ENCODE measurements at regions of chr2 and their contacts with region 1.

Region 1: DNA sequence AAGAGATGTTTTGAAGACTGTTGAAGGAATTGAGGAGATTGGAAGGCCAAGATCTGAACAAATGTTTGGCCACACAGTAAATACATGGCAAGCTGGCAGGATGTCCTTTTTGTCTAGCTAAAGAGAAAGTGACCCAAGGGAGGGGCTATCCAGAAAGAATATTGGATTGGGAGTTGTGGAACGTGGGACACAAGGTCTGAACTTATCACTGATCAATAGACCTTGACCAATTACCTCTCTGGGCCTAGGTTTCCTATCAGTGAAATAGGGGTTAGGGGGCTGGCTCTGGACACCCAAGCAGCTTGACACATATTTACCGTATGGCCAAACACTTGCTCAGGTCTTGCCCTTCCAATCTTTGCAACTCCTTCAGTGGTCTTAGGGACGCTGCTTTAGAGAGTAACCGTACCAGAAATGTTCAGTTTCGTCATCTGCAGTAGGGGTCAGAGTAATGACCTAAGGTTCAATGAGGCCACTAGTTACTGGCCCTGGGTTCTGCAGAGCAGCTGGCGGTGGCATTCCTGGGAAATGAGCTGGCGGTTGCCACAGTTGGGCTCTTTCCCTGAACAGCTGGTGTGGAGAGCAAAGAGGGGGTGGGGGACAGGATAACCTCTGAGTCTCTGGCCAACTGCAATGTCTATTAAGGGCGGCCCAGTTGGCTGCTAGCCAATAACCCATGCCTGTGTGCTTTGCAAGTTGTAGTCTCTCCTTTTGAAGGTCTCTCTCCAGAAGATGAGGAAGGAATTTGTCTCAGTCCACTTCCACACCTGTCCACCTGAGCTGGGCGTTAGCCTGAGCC is 70.2 kb upstream of the STPG4 start:
- DNase-seq: peak; percentile 83 to 94
- ATAC-seq: peak; percentile 96 to 99 (median 98)
- H3K4me3 ChIP-seq: no peak overlapping the region
- H3K27ac ChIP-seq: peak overlapping the region; percentile 70
- H3K4me1 ChIP-seq: peaks cover 45% of the 10 kb centered on the region
- H3K27me3 ChIP-seq: no peaks in the 10 kb centered on the region
- CTCF ChIP-seq: no peak

Region 2: DNA sequence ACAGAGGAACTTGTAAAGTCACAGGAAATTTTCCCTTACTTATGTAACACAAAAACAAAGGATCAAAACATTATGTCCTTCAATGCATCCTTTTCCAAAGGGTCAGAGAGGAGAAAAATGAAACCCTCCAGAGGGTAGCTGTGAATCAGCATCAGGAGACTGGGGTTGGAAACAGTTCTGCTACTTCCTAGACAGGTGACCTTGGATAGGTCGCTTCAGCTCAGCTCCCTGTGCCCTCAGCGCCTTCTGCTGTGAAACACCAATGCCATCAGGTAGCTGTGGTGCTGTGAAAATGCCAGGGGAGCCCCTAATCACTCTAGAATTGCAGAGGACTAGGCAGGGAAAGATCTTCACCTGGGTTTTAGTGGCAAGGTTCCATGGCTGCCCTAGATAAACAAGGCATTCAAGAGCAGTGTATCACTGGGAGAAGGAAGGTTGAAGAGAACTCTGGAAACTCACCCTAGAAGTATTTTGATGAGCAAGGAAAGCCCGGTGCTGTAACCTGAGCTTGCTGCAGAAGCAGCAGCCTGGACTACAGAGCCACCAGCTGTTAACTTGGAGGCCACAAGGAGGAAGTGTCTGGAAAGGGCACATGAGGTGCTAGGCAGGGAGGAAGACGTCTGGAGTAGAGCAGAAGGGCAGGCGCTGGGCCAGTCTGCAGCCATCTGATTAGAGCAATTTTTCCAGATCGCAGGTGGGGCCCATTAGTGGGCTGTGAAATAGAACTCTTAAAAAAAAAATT is 208.9 kb before region 1 on chr2:
- intact Hi-C with region 1: loop called in 1 of 2 experiments (anchors 5 kb)
- DNase-seq: peak; percentile 53 to 86
- ATAC-seq: peak; percentile 86 to 92 (median 92)
- H3K4me3 ChIP-seq: no peak overlapping the region
- H3K27ac ChIP-seq: peak overlapping the region; percentile 93
- H3K4me1 ChIP-seq: peaks cover 39% of the 10 kb centered on the region
- H3K27me3 ChIP-seq: no peaks in the 10 kb centered on the region
- CTCF ChIP-seq: no peak

Region 3: GRCh38 chr2:47155091-47155876 is 70.0 kb before region 1 on chr2 and contains the start of gene STPG4:
- intact Hi-C with region 1: no loop called
- DNase-seq: no peak
- ATAC-seq: peak in 3 of 4 donors; percentile 12 to 37 (median 27)
- H3K4me3 ChIP-seq: no peak within 1 kb of the TSS
- H3K27ac ChIP-seq: no peak within 1 kb of the TSS
- H3K4me1 ChIP-seq: no peaks in the 10 kb centered on the region
- H3K27me3 ChIP-seq: no peaks in the 10 kb centered on the region
- CTCF ChIP-seq: no peak
- total RNA-seq, gene STPG4: not detected

Region 4: DNA sequence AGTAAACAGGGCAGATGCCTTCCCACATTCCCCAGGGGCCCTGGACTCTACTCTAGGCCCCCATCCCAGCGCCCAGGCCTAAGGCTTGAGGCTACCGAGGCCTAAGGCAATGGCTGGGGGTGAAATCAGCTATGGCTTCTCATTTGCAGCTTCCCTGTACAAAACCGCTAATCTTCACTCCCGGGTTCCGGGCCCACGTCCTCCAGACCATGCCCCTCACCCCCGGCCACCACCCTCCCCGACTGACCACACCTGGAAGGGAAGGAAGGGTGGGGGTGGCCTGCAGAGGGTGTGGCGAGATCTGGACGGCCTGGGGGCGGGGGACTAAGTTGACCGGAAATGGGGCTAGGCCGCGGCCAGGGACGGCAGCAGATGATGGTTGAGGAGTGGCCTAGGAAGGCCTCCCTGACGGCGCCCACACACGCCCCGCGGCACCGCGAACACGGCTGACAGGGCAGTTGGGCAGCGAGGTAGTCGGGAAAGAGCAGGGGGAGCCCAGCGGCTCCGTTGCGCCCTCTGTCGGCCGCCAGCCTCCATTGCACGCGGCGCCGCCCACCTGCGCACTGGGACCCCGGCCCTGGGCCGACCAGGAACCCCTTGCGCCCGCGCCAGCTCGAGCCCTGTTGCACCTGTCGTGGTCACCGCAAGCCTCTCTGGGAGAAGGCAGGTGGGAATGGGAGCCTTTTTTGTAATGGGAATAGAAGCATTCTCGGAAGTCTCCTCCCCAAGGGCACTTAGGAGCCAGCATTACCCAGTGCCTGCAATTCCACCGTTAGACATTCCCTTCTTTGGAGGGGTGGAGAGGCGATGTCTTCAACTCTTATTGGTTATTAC is 47.0 kb after region 1 on chr2:
- intact Hi-C with region 1: loop called in 1 of 2 experiments (anchors 5 kb)
- DNase-seq: peak; percentile 76 to 85
- ATAC-seq: peak; percentile 64 to 81 (median 75)
- H3K4me3 ChIP-seq: peak overlapping the region; percentile 49
- H3K27ac ChIP-seq: peak overlapping the region; percentile 95
- H3K4me1 ChIP-seq: peaks cover 34% of the 10 kb centered on the region
- H3K27me3 ChIP-seq: no peaks in the 10 kb centered on the region
- CTCF ChIP-seq: peak; percentile 100